K562 (cell line): ENCODE measurements at regions of chr3 and their contacts with region 1.

Region 1: GRCh38 chr3:65732051-65732935 is 306.4 kb downstream of the MAGI1 start:
- DNase-seq: peak; percentile 39 to 65 (median 46)
- ATAC-seq: peak; percentile 88
- H3K4me3 ChIP-seq: no peak overlapping the region
- H3K27ac ChIP-seq: no peak overlapping the region
- H3K4me1 ChIP-seq: no peaks in the 10 kb centered on the region; a peak in 2 of 5 replicates
- H3K27me3 ChIP-seq: no peaks in the 10 kb centered on the region
- CTCF ChIP-seq: peak; percentile 63 to 71 (median 70)
- EP300 ChIP-seq: no peak
- POLR2A ChIP-seq: no peak
- RAD21 ChIP-seq: peak; percentile 51 to 74

Region 2: DNA sequence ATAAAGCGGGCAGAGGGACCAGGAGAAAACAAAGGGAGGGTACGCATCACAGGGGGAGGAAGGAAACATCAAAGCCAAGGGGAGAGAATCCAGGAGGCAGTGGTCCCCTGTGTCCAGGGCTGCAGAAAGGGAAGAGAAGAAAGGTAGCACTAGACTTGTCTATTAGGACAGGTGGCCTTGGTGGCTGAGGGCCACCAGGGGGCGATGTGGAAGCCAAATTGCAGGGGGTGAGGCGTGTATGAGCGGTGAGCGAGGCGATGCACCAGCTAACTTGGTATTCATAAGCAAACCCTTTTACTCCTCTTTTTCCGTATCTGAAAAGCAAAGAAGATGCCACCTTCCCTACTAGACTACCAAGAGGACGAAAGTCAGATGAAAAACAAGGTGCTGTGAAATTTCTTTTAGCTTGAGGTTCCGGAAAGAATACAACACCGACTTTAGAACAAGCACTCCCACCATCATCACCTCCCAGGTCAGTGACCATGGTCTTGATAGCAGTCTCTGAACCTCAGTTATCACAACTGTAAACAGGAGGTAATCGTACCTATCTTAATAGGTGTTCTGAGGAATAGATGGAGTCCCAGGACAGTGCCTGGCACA is 390.1 kb before region 1 on chr3:
- CTCF ChIA-PET with region 1: interaction called, 3 read pairs
- POLR2A ChIA-PET with region 1: no interaction called
- in situ Hi-C with region 1: no loop called
- intact Hi-C with region 1: loop called (anchors 1 kb)
- DNase-seq: peak; percentile 61 to 75 (median 62)
- ATAC-seq: peak; percentile 99
- H3K4me3 ChIP-seq: no peak overlapping the region
- H3K27ac ChIP-seq: no peak overlapping the region
- H3K4me1 ChIP-seq: peaks cover 0 to 6% of the 10 kb centered on the region in 2 experiments; a peak in 3 of 5 replicates
- H3K27me3 ChIP-seq: no peaks in the 10 kb centered on the region; a peak in 2 of 5 replicates
- CTCF ChIP-seq: peak; percentile 72 to 81 (median 72)
- EP300 ChIP-seq: no peak
- POLR2A ChIP-seq: no peak
- RAD21 ChIP-seq: peak; percentile 27 to 69

Region 3: DNA sequence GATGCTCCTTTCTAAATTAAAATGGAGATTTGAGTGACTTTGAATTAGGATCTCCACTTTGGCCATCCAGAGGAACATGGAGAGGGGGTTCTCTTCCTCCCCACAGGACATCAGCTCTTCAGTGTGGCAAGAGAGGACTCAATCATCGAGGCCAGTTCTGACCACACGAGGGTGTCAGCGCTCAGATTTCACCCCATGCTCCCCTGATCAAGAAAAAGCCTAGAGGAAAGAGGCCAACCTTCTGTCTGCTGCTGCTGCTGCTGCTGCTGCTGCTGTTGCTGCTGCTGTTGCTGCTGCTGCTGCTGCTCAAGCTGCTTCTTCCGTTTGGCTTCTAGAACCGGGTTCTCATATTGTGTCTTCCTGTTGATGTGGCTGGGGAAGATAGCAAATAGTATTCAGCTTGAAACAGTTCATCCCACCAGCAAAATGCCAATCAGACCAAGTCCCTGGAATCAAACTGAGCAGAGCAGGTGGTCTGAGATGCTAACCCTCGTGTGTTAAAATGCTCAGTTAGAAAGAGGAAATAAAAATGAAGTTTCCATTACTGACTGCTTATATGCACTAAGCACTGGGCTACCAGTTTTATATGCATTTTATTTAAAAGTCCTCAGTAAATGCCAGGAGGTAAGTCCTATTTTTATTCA is 292.5 kb before region 1 on chr3:
- CTCF ChIA-PET with region 1: interaction called, 6 read pairs
- POLR2A ChIA-PET with region 1: no interaction called
- in situ Hi-C with region 1: loop called (anchors 10 kb)
- intact Hi-C with region 1: loop called (anchors 2 kb)
- DNase-seq: peak; percentile 27 to 69 (median 52)
- ATAC-seq: peak; percentile 97
- H3K4me3 ChIP-seq: no peak overlapping the region
- H3K27ac ChIP-seq: no peak overlapping the region
- H3K4me1 ChIP-seq: no peaks in the 10 kb centered on the region
- H3K27me3 ChIP-seq: no peaks in the 10 kb centered on the region
- CTCF ChIP-seq: peak; percentile 58 to 66 (median 64)
- EP300 ChIP-seq: no peak
- POLR2A ChIP-seq: no peak
- RAD21 ChIP-seq: peak; percentile 68 to 83

Region 4: GRCh38 chr3:65597226-65597951 is 134.9 kb before region 1 on chr3:
- CTCF ChIA-PET with region 1: no interaction called
- POLR2A ChIA-PET with region 1: no interaction called
- in situ Hi-C with region 1: no loop called
- intact Hi-C with region 1: loop called (anchors 10 kb)
- DNase-seq: no peak
- ATAC-seq: peak; percentile 9; the same call in 2 of the 3 replicates
- H3K4me3 ChIP-seq: peak overlapping the region; percentile 45
- H3K27ac ChIP-seq: no peak overlapping the region
- H3K4me1 ChIP-seq: peaks cover 11 to 31% of the 10 kb centered on the region in 2 experiments; a peak in 4 of 5 replicates
- H3K27me3 ChIP-seq: no peaks in the 10 kb centered on the region
- CTCF ChIP-seq: no peak
- EP300 ChIP-seq: no peak
- POLR2A ChIP-seq: no peak
- RAD21 ChIP-seq: no peak

Region 5: DNA sequence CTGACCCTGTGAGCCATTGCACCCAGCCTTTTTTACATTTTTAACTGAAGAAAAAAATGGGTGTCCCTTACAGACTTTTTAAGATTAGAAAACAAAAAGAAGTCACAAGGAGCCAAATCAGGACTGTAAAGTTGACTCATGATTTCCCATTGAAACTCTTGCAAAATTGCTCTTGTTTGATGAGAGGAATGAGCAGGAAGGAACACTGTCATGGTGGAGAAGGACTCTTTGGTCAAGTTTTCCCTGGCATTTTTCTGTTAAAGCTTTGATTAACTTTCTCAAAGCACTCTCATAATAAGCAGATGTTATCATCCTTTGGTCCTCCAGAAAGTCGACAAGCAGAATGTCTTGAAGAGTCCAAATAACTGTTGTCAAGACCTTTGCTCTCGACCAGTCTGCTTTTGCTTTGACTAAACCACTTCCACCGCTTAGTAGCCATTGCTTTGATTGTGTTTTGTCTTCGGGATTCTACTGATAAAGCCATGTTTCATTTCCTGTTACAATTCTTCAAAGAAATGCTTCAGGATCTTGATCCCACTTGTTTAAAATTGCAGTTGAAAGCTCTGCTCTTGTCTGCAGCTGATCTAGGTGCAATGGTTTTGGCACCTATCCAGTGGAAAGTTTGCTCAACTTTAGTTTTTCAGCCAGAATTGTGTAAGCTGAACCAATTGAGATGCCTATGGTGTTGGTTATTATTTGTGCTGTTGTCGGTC is 63.0 kb before region 1 on chr3:
- CTCF ChIA-PET with region 1: no interaction called
- POLR2A ChIA-PET with region 1: no interaction called
- in situ Hi-C with region 1: no loop called
- intact Hi-C with region 1: no loop called
- DNase-seq: peak in 1 of 4 experiments; percentile 18
- ATAC-seq: no peak
- H3K4me3 ChIP-seq: no peak overlapping the region
- H3K27ac ChIP-seq: no peak overlapping the region
- H3K4me1 ChIP-seq: peaks cover 0 to 18% of the 10 kb centered on the region in 2 experiments; a peak in 3 of 5 replicates
- H3K27me3 ChIP-seq: no peaks in the 10 kb centered on the region
- CTCF ChIP-seq: no peak
- EP300 ChIP-seq: no peak
- POLR2A ChIP-seq: no peak
- RAD21 ChIP-seq: no peak

Region 6: GRCh38 chr3:66153481-66154443 is 421.5 kb after region 1 on chr3:
- CTCF ChIA-PET with region 1: no interaction called
- POLR2A ChIA-PET with region 1: no interaction called
- in situ Hi-C with region 1: no loop called
- intact Hi-C with region 1: no loop called
- DNase-seq: no peak
- ATAC-seq: no peak
- H3K4me3 ChIP-seq: no peak overlapping the region
- H3K27ac ChIP-seq: no peak overlapping the region
- H3K4me1 ChIP-seq: no peaks in the 10 kb centered on the region
- H3K27me3 ChIP-seq: peaks cover 0 to 9% of the 10 kb centered on the region in 2 experiments; a peak in 2 of 5 replicates
- CTCF ChIP-seq: no peak
- EP300 ChIP-seq: no peak
- POLR2A ChIP-seq: no peak
- RAD21 ChIP-seq: no peak